ENCODE measurements at regions of chr15 and their contacts with region 1.

Region 1: DNA sequence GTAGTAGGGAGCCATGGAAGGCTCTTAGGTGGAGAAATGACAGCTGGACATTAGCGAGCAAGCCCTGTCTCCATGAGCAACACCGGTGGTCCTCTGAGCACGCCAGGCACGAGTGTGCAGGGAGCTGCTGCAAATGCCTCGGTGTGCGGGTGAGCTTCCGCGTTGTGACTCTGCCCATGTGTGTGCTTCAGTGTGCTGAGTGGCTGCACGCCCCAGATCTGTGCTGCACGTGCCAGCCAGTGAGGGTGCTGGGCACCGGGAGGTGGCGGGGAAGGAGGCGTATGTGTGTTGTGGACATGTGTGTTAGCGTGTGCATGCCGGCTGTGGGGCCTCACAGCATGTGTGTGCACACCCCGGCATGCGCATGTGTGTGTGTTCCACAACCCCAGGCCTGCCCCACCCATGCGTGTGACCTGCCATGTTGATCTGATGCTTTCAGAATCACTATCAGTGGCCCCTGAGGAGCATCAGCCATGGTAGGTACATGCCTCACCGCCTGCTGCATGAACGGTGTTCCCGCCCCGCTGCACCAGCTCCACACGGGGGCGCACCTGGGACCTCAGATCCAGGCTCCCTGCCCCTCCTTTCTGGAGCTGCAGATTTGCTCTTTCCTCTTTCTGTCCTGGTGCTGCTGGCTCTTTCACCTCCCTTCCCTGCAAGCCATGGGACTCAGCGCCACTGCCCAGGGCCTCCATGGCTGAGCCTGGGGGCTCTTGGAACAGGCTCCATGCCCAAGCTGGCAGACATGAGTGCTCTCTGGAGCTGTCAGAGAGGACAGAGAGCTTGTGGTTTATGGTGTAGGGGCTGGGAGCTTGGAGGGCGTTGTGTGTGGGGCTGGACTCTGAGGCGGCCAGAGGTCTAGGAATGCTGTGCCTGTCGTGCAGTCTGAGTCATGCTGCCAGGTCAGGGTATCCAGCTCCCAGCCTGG is 169.4 kb downstream of the TBC1D2B start:
- DNase-seq: peak; percentile 81
- H3K4me3 Mint-ChIP-seq: no peak overlapping the region
- H3K27ac Mint-ChIP-seq: no peak overlapping the region
- H3K4me1 Mint-ChIP-seq: peaks cover 2% of the 10 kb centered on the region
- H3K27me3 Mint-ChIP-seq: no peaks in the 10 kb centered on the region

Region 2: DNA sequence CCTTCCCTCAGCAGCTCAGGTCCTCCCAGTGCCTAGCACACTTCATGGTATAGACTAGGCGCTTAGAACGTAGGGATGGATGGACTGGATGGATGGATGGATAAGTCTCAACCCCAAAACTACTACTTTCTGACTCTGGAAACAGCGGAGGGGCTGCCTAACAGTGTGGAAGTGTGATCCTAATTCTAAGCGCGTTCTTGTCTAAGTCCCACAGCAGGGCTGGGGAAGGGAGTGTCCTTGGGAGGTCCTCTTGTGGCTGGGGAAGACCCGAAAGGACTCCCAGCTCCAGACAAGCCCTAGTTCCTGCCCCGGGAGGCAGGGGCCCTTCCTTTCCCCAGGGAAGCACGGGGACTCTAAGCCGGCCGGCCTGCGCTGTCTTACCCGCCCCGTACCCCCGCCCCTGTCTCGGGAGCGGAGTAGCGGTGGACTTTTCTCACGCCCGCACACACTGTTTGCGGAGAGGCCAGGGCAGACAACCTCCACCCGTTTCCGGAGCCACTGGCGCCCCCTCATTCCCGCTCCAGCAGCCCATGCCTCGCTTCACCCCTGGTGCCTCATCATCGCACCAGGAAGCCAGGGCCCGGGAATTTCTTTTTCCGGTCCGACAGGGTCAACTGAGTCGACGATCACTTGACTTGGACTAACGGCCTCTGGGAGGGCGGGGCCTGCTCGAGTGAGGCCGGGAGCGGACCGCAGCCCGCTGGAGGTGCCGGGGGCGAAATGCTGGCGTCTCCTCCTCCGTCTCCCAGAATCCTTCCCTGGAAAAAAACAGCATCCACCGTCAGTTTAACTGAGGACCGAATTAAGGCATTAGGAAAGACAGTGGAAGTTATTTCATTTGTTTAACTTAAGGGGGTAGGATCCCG is 36.1 kb after region 1 on chr15:
- CTCF ChIA-PET with region 1: interaction called, 7 read pairs
- intact Hi-C with region 1: loop called (anchors 1 kb)
- DNase-seq: peak; percentile 82
- H3K4me3 Mint-ChIP-seq: peak overlapping the region; percentile 69
- H3K27ac Mint-ChIP-seq: peak overlapping the region; percentile 59
- H3K4me1 Mint-ChIP-seq: peaks cover 9% of the 10 kb centered on the region
- H3K27me3 Mint-ChIP-seq: no peaks in the 10 kb centered on the region

Region 3: GRCh38 chr15:77959432-77959879 is 51.4 kb after region 1 on chr15:
- CTCF ChIA-PET with region 1: interaction called, 7 read pairs
- intact Hi-C with region 1: loop called (anchors 5 kb)
- DNase-seq: peak; percentile 85
- H3K4me3 Mint-ChIP-seq: peak overlapping the region; percentile 17
- H3K27ac Mint-ChIP-seq: no peak overlapping the region
- H3K4me1 Mint-ChIP-seq: peaks cover under 1% of the 10 kb centered on the region
- H3K27me3 Mint-ChIP-seq: peaks cover 3% of the 10 kb centered on the region

Measured in activated naive CD4-positive, alpha-beta T cell treated with anti-CD3 and anti-CD28 coated beads for 36 hours (primary cell).